ENCODE measurements at regions of chr16 and their contacts with region 1.

Region 1: DNA sequence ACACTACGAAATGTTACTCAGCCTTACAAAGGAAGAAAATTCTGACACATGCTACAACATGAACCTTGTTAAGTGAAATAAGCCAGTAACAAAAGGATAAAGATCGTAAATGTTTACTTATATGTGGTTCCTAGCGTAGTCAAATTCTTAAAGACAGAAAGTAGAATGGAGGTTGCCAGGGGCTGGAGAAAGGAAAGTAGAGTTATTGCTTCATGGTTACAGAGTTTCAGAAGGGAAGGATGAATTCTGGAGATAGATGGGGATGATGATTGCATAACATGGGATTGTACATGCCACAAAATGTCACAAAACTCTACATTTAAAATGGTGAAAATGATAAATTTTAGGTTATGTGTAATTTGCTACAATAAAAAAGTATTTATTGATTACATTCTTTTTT is 103.8 kb downstream of the CHD9NB start:
- DNase-seq: no peak
- H3K4me3 ChIP-seq: no peak overlapping the region
- H3K27ac ChIP-seq: no peak overlapping the region
- H3K4me1 ChIP-seq: no peaks in the 10 kb centered on the region
- H3K27me3 ChIP-seq: peaks cover 16% of the 10 kb centered on the region
- CTCF ChIP-seq: no peak

Region 2: DNA sequence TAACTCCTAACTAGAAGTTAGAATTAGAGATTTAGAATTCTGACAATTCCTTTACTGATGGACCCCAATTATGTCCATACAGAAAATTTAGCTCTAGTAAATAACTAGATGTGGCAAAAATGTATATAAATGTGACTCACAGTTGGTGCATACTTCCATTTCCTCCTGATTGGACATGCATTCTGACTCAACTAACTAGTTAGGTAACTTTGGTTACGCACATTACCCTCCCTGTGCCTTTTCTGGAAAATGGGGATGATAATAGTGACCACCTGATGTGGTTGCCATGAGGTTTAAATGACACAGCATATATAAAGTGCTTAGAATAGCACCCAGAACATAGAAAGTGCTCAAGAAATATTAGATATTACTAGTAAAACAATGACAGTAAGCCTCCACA is 1247.9 kb before region 1 on chr16:
- CTCF ChIA-PET with region 1: interaction called, 13 read pairs
- POLR2A ChIA-PET with region 1: no interaction called
- intact Hi-C with region 1: no loop called
- DNase-seq: no peak
- H3K4me3 ChIP-seq: no peak overlapping the region
- H3K27ac ChIP-seq: no peak overlapping the region
- H3K4me1 ChIP-seq: no peaks in the 10 kb centered on the region
- H3K27me3 ChIP-seq: no peaks in the 10 kb centered on the region
- CTCF ChIP-seq: no peak

Measured in PC-9 (cell line).